ENCODE measurements at regions of chr19 and their contacts with region 1.

Region 1: GRCh38 chr19:19488875-19489690 is 26.3 kb downstream of the TSSK6 start:
- DNase-seq: peak; percentile 70 to 87
- H3K4me3 ChIP-seq: peak overlapping the region in 1 of 4 experiments; percentile 11; a peak in 1 of 8 replicates
- H3K27ac ChIP-seq: peak overlapping the region; percentile 67; the same call in 1 of the 2 replicates
- H3K4me1 ChIP-seq: peaks cover 11 to 28% (median 19%) of the 10 kb centered on the region in 4 experiments
- H3K27me3 ChIP-seq: no peaks in the 10 kb centered on the region
- CTCF ChIP-seq: no peak
- EP300 ChIP-seq: peak in 1 of 2 experiments; percentile 87; a peak in 1 of 3 replicates
- POLR2A ChIP-seq: peak in 1 of 2 experiments; percentile 33; a peak in 1 of 3 replicates
- RAD21 ChIP-seq: no peak; a peak in 1 of 4 replicates

Region 2: GRCh38 chr19:19354932-19355331 is 134.2 kb before region 1 on chr19:
- CTCF ChIA-PET with region 1: interaction called, 15 read pairs
- POLR2A ChIA-PET with region 1: interaction called, 44 read pairs
- DNase-seq: no peak
- H3K4me3 ChIP-seq: no peak overlapping the region
- H3K27ac ChIP-seq: no peak overlapping the region
- H3K4me1 ChIP-seq: no peaks in the 10 kb centered on the region
- H3K27me3 ChIP-seq: no peaks in the 10 kb centered on the region
- CTCF ChIP-seq: no peak
- EP300 ChIP-seq: no peak
- POLR2A ChIP-seq: no peak
- RAD21 ChIP-seq: no peak

Region 3: GRCh38 chr19:19372656-19373416 is 116.2 kb before region 1 on chr19:
- CTCF ChIA-PET with region 1: interaction called, 146 read pairs
- POLR2A ChIA-PET with region 1: interaction called, 44 read pairs
- DNase-seq: no peak
- H3K4me3 ChIP-seq: no peak overlapping the region
- H3K27ac ChIP-seq: no peak overlapping the region
- H3K4me1 ChIP-seq: peaks cover 0 to 4% (median 4%) of the 10 kb centered on the region in 4 experiments; a peak in 5 of 7 replicates
- H3K27me3 ChIP-seq: no peaks in the 10 kb centered on the region
- CTCF ChIP-seq: no peak
- EP300 ChIP-seq: no peak
- POLR2A ChIP-seq: no peak
- RAD21 ChIP-seq: no peak

Region 4: DNA sequence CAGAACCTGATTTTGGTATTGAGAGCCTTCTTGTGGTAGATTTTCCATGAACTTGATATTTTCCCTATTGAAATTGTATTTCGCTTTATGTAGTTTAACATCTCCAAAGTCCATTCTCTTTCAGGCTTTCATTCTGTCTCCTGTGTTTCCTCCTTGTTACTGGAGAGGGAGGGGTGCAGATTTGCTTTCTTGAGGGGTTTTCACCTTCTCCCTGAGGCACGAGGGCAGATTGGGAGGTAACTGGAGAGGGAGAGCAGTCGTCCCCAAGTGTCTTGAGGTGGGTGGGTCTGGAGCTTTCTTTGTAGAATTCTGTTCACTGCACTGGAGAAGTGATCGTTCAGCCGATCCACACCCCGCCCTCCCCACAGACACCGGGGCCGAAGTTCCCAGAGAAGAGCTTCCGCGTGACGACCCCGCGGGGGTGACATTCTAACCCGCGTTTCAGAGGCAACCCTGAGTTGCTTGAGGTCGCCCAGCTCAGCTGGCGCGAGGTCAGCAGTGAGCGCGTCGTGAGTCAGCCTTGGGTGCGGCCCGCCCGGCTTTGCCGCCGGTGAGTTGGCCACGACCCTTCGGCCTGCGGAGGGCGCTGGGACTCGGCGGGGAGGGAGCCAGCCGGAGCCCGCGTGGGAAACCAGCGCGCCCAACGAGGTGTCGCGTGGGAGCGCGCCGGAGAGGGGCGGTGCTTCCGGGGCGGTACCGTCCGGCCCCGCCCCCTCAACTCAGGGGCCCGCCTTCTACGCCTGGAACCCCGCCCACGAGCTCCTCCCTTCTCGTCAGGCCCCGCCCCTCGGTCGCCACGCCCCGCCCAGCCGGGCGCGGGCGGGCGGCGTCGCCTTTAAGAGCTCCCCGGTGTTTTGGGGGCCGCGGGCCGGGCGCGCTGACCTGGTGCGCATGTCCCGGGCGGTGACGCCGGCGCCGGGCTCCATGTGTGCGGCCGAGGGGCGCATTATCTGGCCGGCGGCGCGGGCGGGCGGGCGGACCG is 83.9 kb before region 1 on chr19 and contains the start of gene GATAD2A:
- CTCF ChIA-PET with region 1: interaction called, 45 read pairs
- POLR2A ChIA-PET with region 1: interaction called, 10 read pairs
- DNase-seq: peak; percentile 66 to 98
- H3K4me3 ChIP-seq: peak within 1 kb of the TSS; percentile 55 to 95 (median 81)
- H3K27ac ChIP-seq: peak within 1 kb of the TSS; percentile 73; the same call in 1 of the 2 replicates
- H3K4me1 ChIP-seq: peaks cover 6 to 23% (median 20%) of the 10 kb centered on the region in 4 experiments; a peak in 6 of 7 replicates
- H3K27me3 ChIP-seq: no peaks in the 10 kb centered on the region
- CTCF ChIP-seq: no peak
- EP300 ChIP-seq: no peak
- POLR2A ChIP-seq: peak; percentile 37 to 75
- RAD21 ChIP-seq: no peak; a peak in 1 of 4 replicates
- total RNA-seq, gene GATAD2A: 205 and 210 TPM in 2 replicates

Region 5: DNA sequence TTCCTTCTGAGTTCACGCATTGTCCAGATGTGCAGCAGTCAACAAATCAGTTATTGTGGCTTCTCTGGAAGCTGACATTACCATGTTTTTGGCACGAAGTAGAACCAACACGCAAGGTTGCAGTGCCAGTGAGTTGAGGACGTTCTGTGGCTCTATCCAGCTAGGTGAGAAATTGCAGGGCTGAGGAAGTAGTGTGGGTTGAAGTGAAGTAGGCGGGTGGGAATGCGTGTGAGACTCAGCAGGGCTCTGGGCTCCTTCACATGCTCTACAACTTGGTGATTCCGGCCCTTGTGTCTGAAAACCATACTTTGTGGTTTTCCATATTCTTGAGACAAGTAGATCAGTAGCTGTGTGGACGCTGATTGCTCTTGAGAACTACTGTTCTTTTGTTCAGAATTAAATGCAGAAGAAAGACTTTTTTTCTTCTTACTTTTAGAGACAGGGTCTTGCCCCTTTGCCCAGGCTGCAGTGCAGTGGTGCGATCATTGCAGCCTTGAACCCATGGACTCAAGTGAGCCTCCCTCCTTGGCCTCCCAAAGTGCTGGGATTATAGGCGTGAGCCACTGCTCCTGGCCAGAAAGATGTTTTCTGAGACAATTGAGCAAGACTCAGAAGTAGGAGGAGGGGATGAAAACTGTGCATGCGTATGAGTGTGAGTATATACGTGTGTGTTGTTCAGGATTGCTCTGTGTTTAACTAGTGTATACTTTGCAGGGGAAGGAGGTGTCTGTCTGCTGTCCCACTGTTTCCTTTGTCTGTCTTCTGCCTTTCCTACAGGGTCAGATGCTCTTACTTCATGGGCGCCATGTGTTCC is 37.4 kb before region 1 on chr19:
- CTCF ChIA-PET with region 1: interaction called, 10 read pairs
- POLR2A ChIA-PET with region 1: no interaction called
- DNase-seq: no peak
- H3K4me3 ChIP-seq: no peak overlapping the region
- H3K27ac ChIP-seq: 0 out of 2 replicates have a peak overlapping the region, but pooled peaks have one; percentile 40
- H3K4me1 ChIP-seq: peaks cover 7 to 11% (median 8%) of the 10 kb centered on the region in 4 experiments
- H3K27me3 ChIP-seq: no peaks in the 10 kb centered on the region
- CTCF ChIP-seq: no peak
- EP300 ChIP-seq: no peak
- POLR2A ChIP-seq: no peak
- RAD21 ChIP-seq: no peak

Region 6: DNA sequence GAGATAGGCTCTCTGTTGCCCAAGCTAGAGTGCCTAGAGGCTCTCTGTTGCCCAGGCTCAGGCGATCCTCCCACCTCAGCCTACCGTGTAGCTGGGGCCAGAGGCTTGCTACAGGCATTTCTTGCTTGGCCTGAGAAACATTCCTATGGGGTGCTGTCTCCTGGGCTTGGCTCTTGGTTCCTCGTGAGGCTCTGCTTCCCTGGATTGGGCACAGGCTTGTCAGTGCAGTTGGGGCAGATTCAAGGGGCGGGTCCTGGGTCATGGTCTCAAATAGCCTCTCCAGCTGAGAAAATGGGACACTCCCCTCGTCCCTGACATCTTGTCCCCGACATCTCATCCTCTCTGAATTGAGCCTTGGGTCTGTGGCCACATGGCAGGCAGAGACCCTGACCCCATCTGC is 21.3 kb after region 1 on chr19:
- CTCF ChIA-PET with region 1: interaction called, 22 read pairs
- POLR2A ChIA-PET with region 1: interaction called, 9 read pairs
- DNase-seq: no peak
- H3K4me3 ChIP-seq: no peak overlapping the region
- H3K27ac ChIP-seq: no peak overlapping the region
- H3K4me1 ChIP-seq: no peaks in the 10 kb centered on the region; a peak in 1 of 7 replicates
- H3K27me3 ChIP-seq: no peaks in the 10 kb centered on the region; a peak in 1 of 7 replicates
- CTCF ChIP-seq: no peak
- EP300 ChIP-seq: no peak
- POLR2A ChIP-seq: no peak; a peak in 1 of 3 replicates
- RAD21 ChIP-seq: no peak

Region 7: DNA sequence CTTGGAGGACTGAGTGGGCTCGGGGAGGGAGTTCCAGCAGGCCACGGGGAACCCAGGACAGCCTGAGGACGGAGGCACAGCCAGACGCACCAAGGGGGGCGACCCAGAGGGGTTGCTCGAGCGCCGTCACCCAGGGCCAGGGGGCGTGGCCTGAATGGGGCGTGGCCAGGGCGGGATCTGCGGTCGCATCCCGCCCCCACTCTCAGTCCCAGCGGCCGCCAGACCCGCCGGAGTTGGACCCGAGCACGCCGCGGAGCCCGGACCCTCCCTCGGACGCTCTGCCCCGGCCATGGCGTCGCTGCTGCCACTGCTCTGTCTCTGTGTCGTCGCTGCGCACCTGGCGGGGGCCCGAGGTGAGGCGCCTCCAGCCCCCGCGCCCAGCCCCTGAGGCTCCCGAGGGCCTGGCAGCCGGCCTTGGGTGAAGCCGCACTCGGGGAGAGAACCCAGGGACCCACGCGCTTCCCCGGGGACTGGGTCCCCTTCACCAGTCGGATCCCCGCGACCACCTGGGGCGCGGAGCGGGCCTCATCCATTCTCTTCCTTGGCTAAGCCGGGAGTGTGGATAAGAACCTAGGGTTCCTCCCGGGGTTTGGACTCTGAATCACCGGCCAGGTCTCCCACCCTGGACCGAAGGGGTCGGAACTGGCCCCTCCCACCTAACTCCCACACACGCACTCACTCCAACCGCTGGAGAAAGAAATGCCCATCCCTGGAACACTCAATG is 49.1 kb after region 1 on chr19 and contains the start of gene CILP2:
- CTCF ChIA-PET with region 1: no interaction called
- POLR2A ChIA-PET with region 1: no interaction called
- DNase-seq: peak in 1 of 2 experiments; percentile 96
- H3K4me3 ChIP-seq: peak within 1 kb of the TSS; percentile 45 to 62 (median 52)
- H3K27ac ChIP-seq: no peak within 1 kb of the TSS
- H3K4me1 ChIP-seq: peaks cover 0 to 8% (median 3%) of the 10 kb centered on the region in 4 experiments; a peak in 3 of 7 replicates
- H3K27me3 ChIP-seq: peaks cover 6 to 26% (median 20%) of the 10 kb centered on the region in 4 experiments
- CTCF ChIP-seq: no peak
- EP300 ChIP-seq: no peak
- POLR2A ChIP-seq: peak in 1 of 2 experiments; percentile 66; a peak in 1 of 3 replicates
- RAD21 ChIP-seq: no peak
- total RNA-seq, gene CILP2: 5.8 and 5.9 TPM in 2 replicates

Measured in H1 (cell line).